Gastrocnemius medialis (tissue), 4 donors: ENCODE measurements at regions of chr13 and their contacts with region 1.

Region 1: DNA sequence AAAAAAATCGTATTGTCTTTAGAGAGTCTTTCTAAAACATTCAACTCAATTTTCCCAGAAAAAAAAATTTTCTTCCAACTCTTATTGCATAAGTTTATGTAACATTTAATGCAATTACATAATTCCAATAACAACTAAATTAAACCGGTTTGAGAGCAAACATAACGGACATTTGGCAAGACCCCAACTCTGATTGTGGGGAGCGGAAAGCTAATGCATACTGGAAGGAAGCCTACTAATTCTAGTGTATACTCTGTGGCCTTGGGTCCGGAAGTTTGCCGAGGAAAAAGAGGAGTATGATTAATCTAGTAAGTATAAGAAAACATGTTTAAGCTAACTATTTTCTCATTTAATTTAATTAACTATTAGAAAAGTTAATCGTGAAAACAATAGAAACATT is 21.3 kb upstream of the MIR17HG start:
- DNase-seq: no peak
- ATAC-seq: no peak
- H3K4me3 ChIP-seq: no peak overlapping the region
- H3K27ac ChIP-seq: no peak overlapping the region
- H3K4me1 ChIP-seq: no peaks in the 10 kb centered on the region
- H3K27me3 ChIP-seq: peaks cover 0 to 7% (median 3%) of the 10 kb centered on the region in 3 donors
- CTCF ChIP-seq: no peak
- POLR2A ChIP-seq: no peak

Region 2: GRCh38 chr13:90686442-90686841 is 639.7 kb before region 1 on chr13:
- in situ Hi-C with region 1: no loop called
- intact Hi-C with region 1: no loop called
- DNase-seq: no peak
- ATAC-seq: no peak
- H3K4me3 ChIP-seq: no peak overlapping the region
- H3K27ac ChIP-seq: no peak overlapping the region
- H3K4me1 ChIP-seq: no peaks in the 10 kb centered on the region
- H3K27me3 ChIP-seq: no peaks in the 10 kb centered on the region
- CTCF ChIP-seq: no peak
- POLR2A ChIP-seq: no peak

Region 3: DNA sequence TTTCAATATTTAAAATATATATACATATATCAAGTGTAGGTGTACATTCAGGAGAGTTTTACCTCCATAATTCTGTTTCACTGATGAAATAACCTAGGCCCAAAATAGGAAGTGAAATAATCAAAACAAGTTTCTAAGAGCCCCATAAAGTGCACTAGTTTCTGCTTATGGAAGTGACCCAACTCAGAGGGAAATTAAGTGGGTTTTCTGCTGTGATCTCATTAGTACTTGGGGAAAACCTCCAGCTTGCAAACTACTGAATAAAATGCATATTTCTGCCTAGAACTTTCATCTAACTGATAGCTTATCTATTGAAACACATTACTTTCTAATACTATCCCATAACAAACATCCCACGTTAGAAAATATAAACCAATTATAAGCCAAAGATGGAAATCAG is 24.0 kb before region 1 on chr13:
- in situ Hi-C with region 1: no loop called
- intact Hi-C with region 1: loop called (anchors 1 kb)
- DNase-seq: no peak
- ATAC-seq: no peak
- H3K4me3 ChIP-seq: no peak overlapping the region
- H3K27ac ChIP-seq: no peak overlapping the region
- H3K4me1 ChIP-seq: no peaks in the 10 kb centered on the region
- H3K27me3 ChIP-seq: no peaks in the 10 kb centered on the region
- CTCF ChIP-seq: no peak
- POLR2A ChIP-seq: no peak